GM23248 (cell line): ENCODE measurements at regions of chrX and their contacts with region 1.

Region 1: GRCh38 chrX:131633285-131633917 is 89.5 kb downstream of the OR13H1 start:
- DNase-seq: peak; percentile 64
- H3K4me3 ChIP-seq: no peak overlapping the region
- H3K27ac ChIP-seq: no peak overlapping the region
- H3K4me1 ChIP-seq: no peaks in the 10 kb centered on the region
- H3K27me3 ChIP-seq: no peaks in the 10 kb centered on the region

Region 2: GRCh38 chrX:130933358-130933757 is 700.0 kb before region 1 on chrX:
- in situ Hi-C with region 1: no loop called
- DNase-seq: no peak
- H3K4me3 ChIP-seq: no peak overlapping the region
- H3K27ac ChIP-seq: no peak overlapping the region
- H3K4me1 ChIP-seq: no peaks in the 10 kb centered on the region
- H3K27me3 ChIP-seq: no peaks in the 10 kb centered on the region

Region 3: GRCh38 chrX:130975947-130976346 is 657.5 kb before region 1 on chrX:
- in situ Hi-C with region 1: loop called (anchors 25 kb)
- DNase-seq: peak; percentile 62
- H3K4me3 ChIP-seq: no peak overlapping the region
- H3K27ac ChIP-seq: no peak overlapping the region
- H3K4me1 ChIP-seq: peaks cover 6% of the 10 kb centered on the region; the same call in 1 of the 2 replicates
- H3K27me3 ChIP-seq: no peaks in the 10 kb centered on the region

Region 4: GRCh38 chrX:131894987-131895386 is 261.6 kb after region 1 on chrX:
- in situ Hi-C with region 1: no loop called
- DNase-seq: peak; percentile 26
- H3K4me3 ChIP-seq: no peak overlapping the region
- H3K27ac ChIP-seq: no peak overlapping the region
- H3K4me1 ChIP-seq: no peaks in the 10 kb centered on the region
- H3K27me3 ChIP-seq: no peaks in the 10 kb centered on the region